ENCODE measurements at regions of chr16 and their contacts with region 1.

Region 1: DNA sequence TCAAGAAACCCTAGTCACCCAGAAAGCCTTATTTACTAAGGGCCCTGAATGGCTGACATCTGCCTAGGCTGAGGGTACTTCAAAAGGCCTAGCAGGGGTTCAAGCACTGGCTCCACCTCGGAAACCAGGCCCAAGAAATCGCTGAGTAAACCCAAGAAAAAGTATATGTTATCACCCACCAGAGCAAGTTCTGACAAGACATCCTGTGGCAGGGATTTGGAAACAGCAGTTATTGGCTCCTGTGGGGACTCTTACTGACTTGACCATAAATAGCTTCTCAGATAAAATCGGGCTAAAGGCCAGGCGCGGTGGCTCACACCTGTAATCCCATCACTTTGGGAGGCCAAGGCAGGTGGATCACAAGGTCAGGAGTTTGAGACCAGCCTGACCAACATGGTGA is 12.2 kb downstream of the ATP6V0D1 start:
- DNase-seq: no peak
- ATAC-seq: no peak
- H3K4me3 ChIP-seq: no peak overlapping the region
- H3K4me3 Mint-ChIP-seq: no peak overlapping the region
- H3K27ac ChIP-seq: no peak overlapping the region
- H3K27ac Mint-ChIP-seq: no peak overlapping the region
- H3K4me1 ChIP-seq: peaks cover 19% of the 10 kb centered on the region
- H3K4me1 Mint-ChIP-seq: peaks cover 56 to 73% of the 10 kb centered on the region in 2 donors
- H3K27me3 ChIP-seq: no peaks in the 10 kb centered on the region
- H3K27me3 Mint-ChIP-seq: no peaks in the 10 kb centered on the region
- CTCF ChIP-seq: no peak

Region 2: GRCh38 chr16:67428146-67428731 is 40.5 kb before region 1 on chr16:
- intact Hi-C with region 1: loop called (anchors 5 kb)
- DNase-seq: peak; percentile 45 to 68
- ATAC-seq: peak; percentile 64 to 78 (median 68)
- H3K4me3 ChIP-seq: no peak overlapping the region
- H3K4me3 Mint-ChIP-seq: no peak overlapping the region
- H3K27ac ChIP-seq: no peak overlapping the region
- H3K27ac Mint-ChIP-seq: no peak overlapping the region
- H3K4me1 ChIP-seq: peaks cover 13% of the 10 kb centered on the region
- H3K4me1 Mint-ChIP-seq: peaks cover 5% of the 10 kb centered on the region in 2 donors
- H3K27me3 ChIP-seq: peaks cover 32% of the 10 kb centered on the region
- H3K27me3 Mint-ChIP-seq: peaks cover 28 to 40% of the 10 kb centered on the region in 2 donors
- CTCF ChIP-seq: peak; percentile 59

Region 3: GRCh38 chr16:67456391-67457081 is 12.2 kb before region 1 on chr16:
- intact Hi-C with region 1: no loop called
- DNase-seq: no peak
- ATAC-seq: peak in 2 of 3 donors; percentile 26 to 40
- H3K4me3 ChIP-seq: no peak overlapping the region
- H3K4me3 Mint-ChIP-seq: no peak overlapping the region
- H3K27ac ChIP-seq: no peak overlapping the region
- H3K27ac Mint-ChIP-seq: peak overlapping the region; percentile 73 to 86
- H3K4me1 ChIP-seq: peaks cover 22% of the 10 kb centered on the region
- H3K4me1 Mint-ChIP-seq: peaks cover 54 to 77% of the 10 kb centered on the region in 2 donors
- H3K27me3 ChIP-seq: no peaks in the 10 kb centered on the region
- H3K27me3 Mint-ChIP-seq: no peaks in the 10 kb centered on the region
- CTCF ChIP-seq: no peak